ENCODE measurements at regions of chr5 and their contacts with region 1.

Region 1: DNA sequence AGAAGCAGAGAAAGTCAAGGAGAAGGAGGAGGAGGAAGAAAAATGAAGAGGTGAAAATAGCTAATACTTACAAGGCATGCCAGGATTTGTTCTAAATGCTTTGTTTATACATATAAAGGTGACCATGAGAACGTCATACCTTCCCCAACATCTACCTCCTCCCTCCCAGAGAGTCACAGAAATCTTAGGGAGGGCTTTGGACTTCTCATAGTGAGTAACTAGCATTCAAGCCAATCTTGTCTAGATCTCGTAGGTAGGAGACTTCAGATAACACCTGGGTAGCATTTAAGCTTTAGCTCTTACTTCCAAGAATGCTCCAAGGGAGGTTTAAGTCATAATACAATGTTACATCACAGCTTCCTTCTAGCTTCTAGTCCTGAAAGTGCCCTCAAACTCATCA is 36.5 kb upstream of the GPBP1 start:
- DNase-seq: no peak
- H3K4me3 Mint-ChIP-seq: no peak overlapping the region
- H3K27ac Mint-ChIP-seq: no peak overlapping the region
- H3K4me1 Mint-ChIP-seq: no peaks in the 10 kb centered on the region
- H3K27me3 Mint-ChIP-seq: no peaks in the 10 kb centered on the region
- CTCF ChIP-seq: no peak

Region 2: DNA sequence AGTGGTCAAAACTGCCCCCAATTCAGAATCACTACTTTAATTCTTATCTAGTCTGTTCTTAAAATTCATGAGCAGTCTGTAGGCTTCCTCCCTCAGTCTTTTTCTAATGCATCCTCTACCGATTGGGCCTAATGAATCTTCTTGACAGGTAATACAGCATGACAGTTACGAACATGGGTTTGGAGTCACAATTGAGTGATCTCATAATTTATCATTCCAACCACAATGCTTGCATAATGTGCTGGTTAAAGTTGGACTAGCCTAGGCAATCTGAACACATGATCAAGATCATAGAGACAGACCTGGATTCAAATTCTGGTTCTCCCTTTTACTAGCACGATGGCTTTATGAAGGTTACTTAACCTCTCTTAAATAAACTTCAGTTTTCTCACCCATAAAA is 261.1 kb before region 1 on chr5:
- CTCF ChIA-PET with region 1: no interaction called
- POLR2A ChIA-PET with region 1: no interaction called
- intact Hi-C with region 1: no loop called
- DNase-seq: peak; percentile 45
- H3K4me3 Mint-ChIP-seq: no peak overlapping the region
- H3K27ac Mint-ChIP-seq: no peak overlapping the region
- H3K4me1 Mint-ChIP-seq: peaks cover 6% of the 10 kb centered on the region
- H3K27me3 Mint-ChIP-seq: no peaks in the 10 kb centered on the region
- CTCF ChIP-seq: no peak

Region 3: GRCh38 chr5:56909294-56910209 is 227.8 kb before region 1 on chr5 and contains the start of gene SETD9:
- CTCF ChIA-PET with region 1: interaction called, 6 read pairs
- POLR2A ChIA-PET with region 1: interaction called, 18 read pairs
- intact Hi-C with region 1: loop called (anchors 2 kb)
- DNase-seq: peak; percentile 97
- H3K4me3 Mint-ChIP-seq: peak within 1 kb of the TSS; percentile 99
- H3K27ac Mint-ChIP-seq: peak within 1 kb of the TSS; percentile 99
- H3K4me1 Mint-ChIP-seq: peaks cover 8% of the 10 kb centered on the region
- H3K27me3 Mint-ChIP-seq: no peaks in the 10 kb centered on the region
- CTCF ChIP-seq: no peak
- total RNA-seq, gene SETD9: 10.6 and 11.5 TPM in 2 replicates

Region 4: DNA sequence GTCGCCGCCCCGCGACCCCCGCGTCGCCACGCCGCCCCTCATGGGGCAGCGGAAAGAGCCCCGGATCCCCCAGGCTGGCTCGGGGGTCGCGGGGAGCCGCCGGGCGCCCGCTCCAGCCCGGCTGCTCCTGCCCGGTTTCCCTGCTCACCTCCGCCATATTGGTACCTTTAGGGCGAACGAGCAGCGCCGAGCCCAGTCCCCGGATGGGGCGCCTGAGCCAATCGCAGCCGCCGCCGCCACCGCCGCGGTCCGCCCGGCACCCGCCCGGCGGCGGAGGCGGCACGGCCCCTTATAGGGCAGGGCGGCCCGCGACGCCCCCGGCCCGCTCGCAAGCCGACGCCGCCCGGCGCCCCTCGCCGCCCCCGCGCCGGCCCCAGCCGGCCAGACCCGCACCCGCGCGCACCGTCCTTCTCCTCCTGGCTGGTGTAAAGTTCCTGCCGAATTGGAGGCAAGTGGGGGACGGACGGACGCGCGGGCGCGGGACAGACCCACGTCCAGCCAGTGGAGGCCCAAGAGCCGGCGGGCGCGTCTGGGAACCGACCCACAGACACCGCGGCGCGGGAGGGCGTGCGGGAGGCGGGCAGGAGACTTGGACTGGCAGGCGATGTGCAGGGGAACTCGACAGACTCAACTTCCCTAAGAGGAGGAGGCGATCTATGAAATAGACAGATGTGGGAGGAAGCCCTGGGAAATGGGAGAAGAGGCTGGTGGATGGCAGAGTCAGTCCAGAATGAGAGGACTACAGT is 185.3 kb before region 1 on chr5 and contains the start of gene MIER3:
- CTCF ChIA-PET with region 1: interaction called, 32 read pairs
- POLR2A ChIA-PET with region 1: interaction called, 7 read pairs
- intact Hi-C with region 1: loop called (anchors 1 kb)
- DNase-seq: peak; percentile 73
- H3K4me3 Mint-ChIP-seq: peak within 1 kb of the TSS; percentile 88
- H3K27ac Mint-ChIP-seq: peak within 1 kb of the TSS; percentile 56
- H3K4me1 Mint-ChIP-seq: peaks cover 14% of the 10 kb centered on the region
- H3K27me3 Mint-ChIP-seq: peaks cover 13% of the 10 kb centered on the region
- CTCF ChIP-seq: no peak
- total RNA-seq, gene MIER3: 17.8 and 25.0 TPM in 2 replicates

Region 5: DNA sequence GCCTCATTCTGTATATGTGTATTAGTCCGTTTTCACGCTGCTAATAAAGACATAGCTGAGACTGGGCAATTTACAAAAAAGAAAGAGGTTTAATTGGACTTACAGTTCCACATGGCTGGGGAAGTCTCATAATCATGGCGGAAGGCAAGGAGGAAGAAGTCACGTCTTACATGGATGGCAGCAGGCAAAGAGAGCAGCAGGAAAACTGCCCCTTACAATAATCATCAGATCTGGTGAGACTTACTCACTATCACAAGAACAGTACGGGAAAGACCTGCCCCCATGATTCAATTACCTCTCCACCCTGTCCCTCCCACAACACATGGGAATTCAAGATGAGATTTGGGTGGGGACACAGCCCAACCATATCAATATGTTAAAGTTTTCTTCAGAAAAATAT is 13.4 kb before region 1 on chr5:
- CTCF ChIA-PET with region 1: interaction called, 12 read pairs
- POLR2A ChIA-PET with region 1: no interaction called
- intact Hi-C with region 1: no loop called
- DNase-seq: no peak
- H3K4me3 Mint-ChIP-seq: no peak overlapping the region
- H3K27ac Mint-ChIP-seq: no peak overlapping the region
- H3K4me1 Mint-ChIP-seq: no peaks in the 10 kb centered on the region
- H3K27me3 Mint-ChIP-seq: no peaks in the 10 kb centered on the region
- CTCF ChIP-seq: no peak

Region 6: GRCh38 chr5:57173185-57174127 is 36.1 kb after region 1 on chr5 and contains the start of gene GPBP1:
- CTCF ChIA-PET with region 1: interaction called, 3 read pairs
- POLR2A ChIA-PET with region 1: interaction called, 3 read pairs
- intact Hi-C with region 1: loop called (anchors 2 kb)
- DNase-seq: peak; percentile 99
- H3K4me3 Mint-ChIP-seq: peak within 1 kb of the TSS; percentile 97
- H3K27ac Mint-ChIP-seq: peak within 1 kb of the TSS; percentile 99
- H3K4me1 Mint-ChIP-seq: peaks cover 10% of the 10 kb centered on the region
- H3K27me3 Mint-ChIP-seq: no peaks in the 10 kb centered on the region
- CTCF ChIP-seq: no peak
- total RNA-seq, gene GPBP1: 63.6 and 66.5 TPM in 2 replicates

Measured in MCF 10A (cell line).